Cardiac septum (tissue), 1 donor: ENCODE measurements at regions of chr1 and their contacts with region 1.

Region 1: GRCh38 chr1:154479764-154480421 is 22.1 kb upstream of the TDRD10 start:
- DNase-seq: no peak

Region 2: GRCh38 chr1:154256686-154257085 is 223.2 kb before region 1 on chr1:
- intact Hi-C with region 1: no loop called
- DNase-seq: no peak

Region 3: DNA sequence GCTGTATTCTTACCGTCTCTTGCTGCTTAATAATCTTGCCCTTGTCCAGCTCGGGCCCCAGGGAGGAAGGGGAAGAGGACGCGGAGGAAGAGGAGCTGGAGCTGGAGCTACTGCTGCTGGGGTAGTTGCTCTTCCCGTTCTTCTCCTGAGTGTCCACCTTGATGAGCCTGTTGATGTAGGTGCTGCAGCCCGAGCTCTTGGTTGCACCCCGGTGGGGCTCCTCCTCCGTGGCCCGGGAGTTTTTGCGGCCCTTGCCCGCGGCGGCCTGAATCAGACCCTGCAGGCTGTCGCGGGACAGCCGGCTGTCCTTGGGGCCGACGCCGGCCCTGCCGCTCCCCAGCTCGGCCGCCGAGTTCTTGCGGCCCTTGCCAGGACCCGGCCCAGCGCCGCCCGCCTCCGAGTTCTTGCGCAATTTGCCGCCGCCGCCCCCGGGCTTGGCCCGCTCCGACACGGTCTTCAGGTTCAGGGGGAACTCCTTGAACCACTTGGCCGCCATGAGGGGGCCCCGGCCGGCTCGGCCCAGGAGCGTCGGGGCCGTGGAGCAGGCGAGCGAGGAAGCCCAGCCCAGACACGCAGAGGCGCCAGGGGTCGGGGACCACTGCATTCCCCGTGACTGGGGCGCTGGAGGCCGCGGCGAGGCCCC is 21.7 kb after region 1 on chr1:
- intact Hi-C with region 1: loop called (anchors 1 kb)
- DNase-seq: peak; percentile 80

Region 4: GRCh38 chr1:154546264-154547063 is 66.6 kb after region 1 on chr1:
- intact Hi-C with region 1: loop called (anchors 1 kb)
- DNase-seq: no peak

Region 5: GRCh38 chr1:154870115-154870571 is 390.2 kb after region 1 on chr1 and contains the start of gene KCNN3:
- intact Hi-C with region 1: loop called (anchors 10 kb)
- DNase-seq: peak; percentile 94
- total RNA-seq, gene KCNN3: 2.8 TPM

Region 6: DNA sequence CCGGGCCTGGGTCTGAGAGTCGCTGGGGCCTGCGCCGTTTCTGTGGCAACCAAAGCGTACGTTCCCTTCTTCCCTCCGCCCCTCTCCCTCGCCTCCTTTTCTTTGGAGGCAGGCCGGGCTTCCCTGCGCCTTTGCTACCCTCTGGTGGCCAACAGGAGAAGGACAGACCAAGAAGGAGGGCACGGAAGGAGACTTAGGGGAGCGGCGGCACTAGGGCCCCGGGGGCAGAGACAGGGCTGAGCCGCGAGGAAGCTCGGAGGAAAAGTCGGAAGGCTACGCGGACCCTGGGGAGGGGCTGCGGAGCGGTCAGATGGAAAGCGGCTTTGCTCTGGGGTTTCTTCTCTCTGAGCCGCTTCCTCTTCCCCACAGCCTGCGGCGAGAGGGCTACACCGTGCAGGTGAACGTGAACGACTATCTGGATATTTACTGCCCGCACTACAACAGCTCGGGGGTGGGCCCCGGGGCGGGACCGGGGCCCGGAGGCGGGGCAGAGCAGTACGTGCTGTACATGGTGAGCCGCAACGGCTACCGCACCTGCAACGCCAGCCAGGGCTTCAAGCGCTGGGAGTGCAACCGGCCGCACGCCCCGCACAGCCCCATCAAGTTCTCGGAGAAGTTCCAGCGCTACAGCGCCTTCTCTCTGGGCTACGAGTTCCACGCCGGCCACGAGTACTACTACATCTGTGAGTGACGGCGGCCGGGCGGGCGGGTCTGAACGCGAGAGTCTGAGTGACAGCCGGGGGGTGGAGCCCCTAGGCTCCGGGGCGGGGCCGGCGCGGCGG is 605.0 kb after region 1 on chr1:
- intact Hi-C with region 1: loop called (anchors 10 kb)
- DNase-seq: peak; percentile 96